ENCODE measurements at regions of chr3 and their contacts with region 1.

Region 1: DNA sequence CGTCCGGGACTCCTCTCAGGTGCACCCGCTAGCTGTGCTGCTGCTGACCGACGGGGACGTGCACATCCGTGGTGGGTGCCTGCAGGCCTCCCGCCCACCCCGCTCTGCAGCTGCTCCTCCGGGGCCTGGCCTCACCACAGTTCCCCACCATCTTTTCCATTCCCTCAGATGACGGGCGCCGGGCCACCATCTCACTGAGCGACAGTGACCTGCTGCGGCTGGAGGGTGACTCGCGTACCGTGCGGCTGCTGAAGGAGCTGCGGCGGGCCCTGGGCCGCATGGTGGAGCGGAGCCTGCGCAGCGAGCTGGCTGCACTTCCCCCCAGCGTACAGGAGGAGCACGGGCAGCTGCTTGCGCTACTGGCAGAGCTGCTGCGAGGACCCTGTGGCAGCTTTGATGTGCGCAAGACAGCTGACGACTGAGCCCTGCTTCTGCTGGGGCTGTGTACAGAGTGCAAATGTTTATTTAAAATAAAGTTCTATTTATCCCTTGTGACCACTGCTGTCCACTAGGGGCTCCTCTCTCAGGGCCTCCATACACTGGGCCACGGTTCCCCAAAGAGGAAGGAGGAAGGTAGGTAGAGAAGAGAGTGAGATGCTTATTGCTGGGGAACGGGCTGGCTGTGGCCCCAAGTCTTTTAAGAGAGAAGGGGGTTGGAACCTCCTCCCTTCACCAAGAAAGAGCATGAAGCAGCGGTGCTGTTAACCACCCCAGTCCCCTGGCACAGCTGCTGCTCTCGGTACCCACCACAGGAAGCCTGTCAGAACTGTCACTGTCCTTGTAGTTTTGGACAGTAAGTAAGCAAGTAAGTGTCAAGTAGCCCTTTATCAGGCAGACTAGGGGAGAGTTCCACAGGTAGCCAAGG is 47.0 kb downstream of the DHX30 start:
- DNase-seq: no peak
- H3K4me3 ChIP-seq: no peak overlapping the region
- H3K27me3 ChIP-seq: no peaks in the 10 kb centered on the region
- CTCF ChIP-seq: peak; percentile 65

Region 2: DNA sequence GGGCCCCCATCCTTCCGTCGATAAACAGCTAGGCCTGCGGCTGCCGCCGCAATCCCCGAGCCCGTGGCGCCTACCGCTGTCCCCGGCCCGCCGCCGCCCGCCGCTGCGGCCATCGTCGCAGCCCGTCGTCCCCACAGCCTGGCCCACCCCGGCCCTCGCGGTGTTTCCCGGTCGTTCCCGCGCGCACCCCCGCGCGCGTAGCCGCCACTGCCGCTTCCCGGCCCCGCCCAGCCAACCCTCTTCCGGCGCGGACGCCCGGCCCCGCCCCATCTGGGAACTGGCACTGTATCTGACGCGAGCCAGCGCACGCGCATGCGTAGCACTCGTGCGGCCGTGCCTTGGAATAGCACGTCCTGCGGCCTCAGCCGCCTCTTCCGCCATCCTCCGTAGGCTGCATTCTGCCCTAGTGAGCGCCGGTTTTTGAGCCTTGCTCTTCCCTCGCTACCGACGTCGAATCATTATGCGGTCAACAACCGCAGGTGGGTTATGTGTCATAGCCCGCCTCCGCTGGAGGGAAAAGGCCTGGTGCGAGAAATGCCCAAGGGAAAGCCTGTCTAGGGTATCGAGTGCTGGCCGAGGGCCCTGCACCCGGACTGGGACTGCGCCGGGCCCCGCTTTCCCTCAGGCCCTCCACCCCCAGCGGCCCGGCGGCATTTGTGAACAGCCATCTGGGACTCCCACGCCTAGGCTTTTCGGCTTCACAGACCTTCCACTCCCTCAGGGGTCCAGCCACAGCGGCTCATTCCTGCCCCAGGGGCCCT is 68.1 kb before region 1 on chr3 and contains the start of gene SMARCC1:
- CTCF ChIA-PET with region 1: no interaction called
- POLR2A ChIA-PET with region 1: no interaction called
- DNase-seq: peak; percentile 82
- H3K4me3 ChIP-seq: peak within 1 kb of the TSS; percentile 83
- H3K27me3 ChIP-seq: no peaks in the 10 kb centered on the region
- CTCF ChIP-seq: 0 out of 2 replicates have a peak, but pooled peaks have one; percentile 3
- polyA plus RNA-seq, gene SMARCC1: 14.8 and 25.8 TPM in 2 replicates

Region 3: GRCh38 chr3:47836986-47837385 is 12.9 kb before region 1 on chr3:
- CTCF ChIA-PET with region 1: interaction called, 17 read pairs
- POLR2A ChIA-PET with region 1: no interaction called
- DNase-seq: no peak
- H3K4me3 ChIP-seq: no peak overlapping the region
- H3K27me3 ChIP-seq: no peaks in the 10 kb centered on the region
- CTCF ChIP-seq: no peak

Region 4: GRCh38 chr3:47859956-47860605 is 10.2 kb after region 1 on chr3:
- CTCF ChIA-PET with region 1: interaction called, 11 read pairs
- POLR2A ChIA-PET with region 1: no interaction called
- DNase-seq: no peak
- H3K4me3 ChIP-seq: no peak overlapping the region
- H3K27me3 ChIP-seq: no peaks in the 10 kb centered on the region
- CTCF ChIP-seq: no peak